A549 (cell line): ENCODE measurements at regions of chr9 and their contacts with region 1.

Region 1: DNA sequence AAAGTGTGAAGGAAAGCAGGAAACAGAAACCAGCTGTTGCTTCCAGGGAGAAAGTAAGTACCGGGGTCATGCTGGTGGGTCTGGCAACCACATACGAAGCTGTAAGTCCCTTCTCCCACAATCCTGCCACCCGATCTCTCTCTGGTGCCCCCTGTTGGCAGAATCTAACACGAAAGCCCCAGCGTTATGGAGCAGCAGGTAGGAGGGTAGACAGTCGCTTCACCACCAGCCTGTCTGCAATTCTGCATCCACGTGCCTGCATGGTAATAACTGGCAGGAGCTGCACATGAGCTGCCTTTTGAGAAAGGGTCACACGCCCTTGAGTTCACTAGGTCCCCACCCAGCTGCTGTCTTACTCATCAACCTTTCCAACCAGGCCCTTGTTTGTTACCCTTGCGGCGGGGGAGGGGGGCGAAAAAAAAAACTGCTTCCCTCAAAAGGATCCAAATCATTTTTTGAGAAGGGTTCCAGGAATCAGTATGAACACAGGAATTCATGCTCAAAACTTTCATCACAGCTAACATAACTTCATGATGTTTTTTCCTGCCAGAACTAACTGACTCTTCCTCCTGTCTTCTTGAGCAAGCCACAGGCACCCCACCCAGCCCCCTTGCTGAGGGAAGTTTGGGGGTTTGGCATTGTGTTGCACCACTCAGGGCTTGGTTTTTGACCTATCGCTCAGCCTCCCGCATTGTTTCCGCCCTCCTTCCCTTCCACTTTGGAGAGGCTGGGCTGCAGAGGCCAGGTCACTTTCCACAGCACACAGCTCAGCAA is 19.6 kb upstream of the TMEM252 start:
- DNase-seq: peak; percentile 13 to 40
- ATAC-seq: peak; percentile 56 to 71; a peak in 4 of 6 replicates
- H3K4me3 ChIP-seq: no peak overlapping the region
- H3K27ac ChIP-seq: no peak overlapping the region
- H3K4me1 ChIP-seq: no peaks in the 10 kb centered on the region
- CTCF ChIP-seq: 0 out of 3 replicates have a peak, but pooled peaks have one; percentile 8
- EP300 ChIP-seq: no peak
- POLR2A ChIP-seq: no peak
- RAD21 ChIP-seq: 0 out of 5 replicates have a peak, but pooled peaks of 1 of the 2 experiments have one; percentile 12

Region 2: DNA sequence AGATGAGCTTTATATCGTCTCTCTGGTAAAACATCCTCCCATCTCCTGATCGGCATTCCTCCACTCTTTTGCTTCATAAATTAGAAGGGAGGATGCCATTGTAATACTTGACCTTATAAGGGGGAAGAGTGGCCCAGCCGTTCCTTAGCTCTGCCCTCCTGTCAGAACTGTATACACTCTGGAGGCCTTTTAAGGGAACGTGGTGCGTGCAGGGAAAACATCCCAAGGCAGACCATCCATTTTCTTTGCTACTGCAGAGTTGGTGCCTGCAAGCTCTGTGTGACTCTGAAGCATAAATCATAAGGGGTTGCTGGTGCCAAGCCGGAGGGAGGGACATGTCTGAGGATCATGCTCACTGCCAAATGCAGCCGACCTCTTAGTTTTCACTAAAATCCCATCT is 113.4 kb before region 1 on chr9:
- CTCF ChIA-PET with region 1: no interaction called
- POLR2A ChIA-PET with region 1: no interaction called
- DNase-seq: no peak
- ATAC-seq: no peak
- H3K4me3 ChIP-seq: no peak overlapping the region
- H3K27ac ChIP-seq: no peak overlapping the region
- H3K4me1 ChIP-seq: no peaks in the 10 kb centered on the region
- CTCF ChIP-seq: no peak
- EP300 ChIP-seq: no peak
- POLR2A ChIP-seq: no peak
- RAD21 ChIP-seq: no peak

Region 3: DNA sequence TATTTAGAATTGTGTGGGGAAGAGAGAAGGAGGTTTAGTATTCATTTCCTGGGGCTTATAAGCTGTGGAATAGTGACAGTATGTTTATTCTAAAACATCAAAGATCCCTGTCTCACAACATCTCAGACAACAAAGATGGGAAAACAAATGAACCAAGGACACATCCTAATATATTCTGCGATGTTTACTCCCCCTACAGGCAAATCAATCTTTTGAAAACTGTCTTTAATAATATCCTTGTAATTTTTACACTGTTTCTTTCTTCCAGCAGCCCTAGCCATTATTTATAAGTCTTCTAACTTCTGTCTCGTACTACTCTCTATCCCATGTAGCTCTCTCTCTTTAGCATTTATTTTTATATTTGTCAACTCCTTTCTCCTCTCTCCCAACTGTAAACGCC is 13.9 kb after region 1 on chr9:
- CTCF ChIA-PET with region 1: interaction called, 10 read pairs
- POLR2A ChIA-PET with region 1: no interaction called
- DNase-seq: no peak
- ATAC-seq: 0 out of 6 replicates have a peak, but pooled peaks of 1 of the 2 experiments have one; percentile 29
- H3K4me3 ChIP-seq: no peak overlapping the region
- H3K27ac ChIP-seq: no peak overlapping the region
- H3K4me1 ChIP-seq: no peaks in the 10 kb centered on the region
- CTCF ChIP-seq: peak; percentile 18; the same call in 1 of the 3 replicates
- EP300 ChIP-seq: no peak
- POLR2A ChIP-seq: no peak
- RAD21 ChIP-seq: 0 out of 5 replicates have a peak, but pooled peaks of 1 of the 2 experiments have one; percentile 21

Region 4: DNA sequence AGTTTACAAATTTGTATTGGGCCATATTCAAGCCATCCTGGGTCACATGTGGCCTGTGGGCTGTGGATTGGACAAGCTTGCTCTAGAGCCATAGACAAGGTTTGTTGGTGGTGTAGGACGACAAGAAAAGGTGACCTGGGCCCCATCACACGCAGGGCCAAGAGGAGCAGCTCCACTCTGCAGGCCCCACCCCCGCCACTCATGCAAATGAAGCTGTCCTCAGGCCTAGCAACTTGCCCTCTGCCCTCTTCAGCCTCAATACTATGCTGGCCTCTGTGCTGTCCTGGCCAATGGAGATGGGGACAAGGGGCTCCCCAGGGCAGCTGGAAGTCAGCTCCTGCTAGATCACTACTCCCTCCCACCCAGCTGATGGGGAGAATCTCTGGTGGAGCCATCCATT is 35.6 kb after region 1 on chr9:
- CTCF ChIA-PET with region 1: no interaction called
- POLR2A ChIA-PET with region 1: no interaction called
- DNase-seq: no peak
- ATAC-seq: no peak
- H3K4me3 ChIP-seq: no peak overlapping the region
- H3K27ac ChIP-seq: no peak overlapping the region
- H3K4me1 ChIP-seq: no peaks in the 10 kb centered on the region
- CTCF ChIP-seq: no peak
- EP300 ChIP-seq: no peak
- POLR2A ChIP-seq: no peak
- RAD21 ChIP-seq: no peak

Region 5: GRCh38 chr9:68637020-68637419 is 76.8 kb after region 1 on chr9:
- CTCF ChIA-PET with region 1: no interaction called
- POLR2A ChIA-PET with region 1: no interaction called
- DNase-seq: no peak
- ATAC-seq: no peak
- H3K4me3 ChIP-seq: no peak overlapping the region
- H3K27ac ChIP-seq: no peak overlapping the region
- H3K4me1 ChIP-seq: no peaks in the 10 kb centered on the region
- CTCF ChIP-seq: no peak
- EP300 ChIP-seq: no peak
- POLR2A ChIP-seq: no peak
- RAD21 ChIP-seq: no peak